WTC11 (cell line): ENCODE measurements at regions of chr14 and their contacts with region 1.

Region 1: GRCh38 chr14:60508707-60509437 is at the start of gene SIX6:
- DNase-seq: peak; percentile 82
- ATAC-seq: peak; percentile 38
- H3K4me3 Mint-ChIP-seq: peak within 1 kb of the TSS; percentile 72
- H3K27ac Mint-ChIP-seq: no peak within 1 kb of the TSS
- H3K4me1 Mint-ChIP-seq: peaks cover 75% of the 10 kb centered on the region
- H3K27me3 Mint-ChIP-seq: peaks cover 100% of the 10 kb centered on the region
- CTCF ChIP-seq: no peak
- total RNA-seq, gene SIX6: 0.07 TPM in 1 of 3 replicates, not detected in the others

Region 2: DNA sequence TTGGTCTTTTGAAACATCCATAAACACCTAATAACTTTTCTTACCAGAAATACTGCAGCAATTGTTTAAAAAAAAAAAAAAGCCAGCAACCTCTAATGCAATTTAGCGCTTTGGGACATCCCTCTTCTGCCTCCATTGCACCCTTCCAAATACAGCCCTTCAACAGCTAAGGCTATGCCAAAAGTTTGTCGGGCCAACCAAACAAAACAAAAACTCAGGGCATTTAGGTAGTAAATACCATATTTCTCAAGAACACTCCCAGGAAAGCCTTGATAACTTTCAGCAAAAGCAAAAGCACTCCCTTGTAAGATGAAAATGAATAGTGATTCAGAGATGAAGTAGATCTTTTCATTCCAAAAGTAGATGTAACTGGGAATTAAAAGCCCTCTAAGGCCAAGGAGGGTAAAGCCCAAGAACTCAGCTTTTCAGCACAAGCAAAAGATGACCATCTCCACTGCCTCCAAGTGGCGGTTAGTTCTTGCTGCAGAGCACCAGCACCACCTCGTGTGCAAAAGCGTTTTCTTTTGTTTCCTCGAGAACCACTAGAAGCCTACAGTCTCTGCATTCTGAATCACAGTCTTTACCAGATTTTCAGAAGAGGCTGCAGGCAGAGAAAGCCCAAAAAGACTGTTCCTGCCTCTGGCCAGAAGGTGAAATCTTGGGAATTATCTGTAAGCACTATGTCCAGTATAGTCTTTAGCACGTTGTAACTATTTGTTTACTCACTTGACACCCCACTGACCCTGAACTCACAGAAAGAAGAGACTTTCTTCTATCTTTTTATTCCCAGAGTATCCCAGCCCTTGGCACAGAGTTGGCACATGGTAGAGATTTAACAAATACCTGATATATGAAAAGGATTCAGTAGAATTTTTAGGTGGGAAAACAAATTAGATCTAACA is 53.2 kb after region 1 on chr14:
- CTCF ChIA-PET with region 1: interaction called, 12 read pairs
- POLR2A ChIA-PET with region 1: no interaction called
- DNase-seq: peak; percentile 68
- ATAC-seq: peak; percentile 98
- H3K4me3 Mint-ChIP-seq: no peak overlapping the region
- H3K27ac Mint-ChIP-seq: no peak overlapping the region
- H3K4me1 Mint-ChIP-seq: peaks cover 11% of the 10 kb centered on the region
- H3K27me3 Mint-ChIP-seq: no peaks in the 10 kb centered on the region
- CTCF ChIP-seq: peak; percentile 58; the same call in 1 of the 2 replicates